Right ventricle myocardium inferior (tissue), 1 donor: ENCODE measurements at regions of chr7 and their contacts with region 1.

Region 1: GRCh38 chr7:115217373-115217772 is 295.5 kb downstream of the MDFIC start:
- DNase-seq: no peak
- ATAC-seq: no peak

Region 2: GRCh38 chr7:114856625-114857024 is 360.7 kb before region 1 on chr7:
- intact Hi-C with region 1: loop called (anchors 5 kb)
- DNase-seq: no peak
- ATAC-seq: no peak

Region 3: GRCh38 chr7:114988755-114989375 is 228.5 kb before region 1 on chr7:
- intact Hi-C with region 1: loop called (anchors 10 kb)
- DNase-seq: peak; percentile 56
- ATAC-seq: peak; percentile 71